Activated naive CD4-positive, alpha-beta T cell treated with anti-CD3 and anti-CD28 coated beads for 36 hours (primary cell): ENCODE measurements at regions of chr22 and their contacts with region 1.

Region 1: DNA sequence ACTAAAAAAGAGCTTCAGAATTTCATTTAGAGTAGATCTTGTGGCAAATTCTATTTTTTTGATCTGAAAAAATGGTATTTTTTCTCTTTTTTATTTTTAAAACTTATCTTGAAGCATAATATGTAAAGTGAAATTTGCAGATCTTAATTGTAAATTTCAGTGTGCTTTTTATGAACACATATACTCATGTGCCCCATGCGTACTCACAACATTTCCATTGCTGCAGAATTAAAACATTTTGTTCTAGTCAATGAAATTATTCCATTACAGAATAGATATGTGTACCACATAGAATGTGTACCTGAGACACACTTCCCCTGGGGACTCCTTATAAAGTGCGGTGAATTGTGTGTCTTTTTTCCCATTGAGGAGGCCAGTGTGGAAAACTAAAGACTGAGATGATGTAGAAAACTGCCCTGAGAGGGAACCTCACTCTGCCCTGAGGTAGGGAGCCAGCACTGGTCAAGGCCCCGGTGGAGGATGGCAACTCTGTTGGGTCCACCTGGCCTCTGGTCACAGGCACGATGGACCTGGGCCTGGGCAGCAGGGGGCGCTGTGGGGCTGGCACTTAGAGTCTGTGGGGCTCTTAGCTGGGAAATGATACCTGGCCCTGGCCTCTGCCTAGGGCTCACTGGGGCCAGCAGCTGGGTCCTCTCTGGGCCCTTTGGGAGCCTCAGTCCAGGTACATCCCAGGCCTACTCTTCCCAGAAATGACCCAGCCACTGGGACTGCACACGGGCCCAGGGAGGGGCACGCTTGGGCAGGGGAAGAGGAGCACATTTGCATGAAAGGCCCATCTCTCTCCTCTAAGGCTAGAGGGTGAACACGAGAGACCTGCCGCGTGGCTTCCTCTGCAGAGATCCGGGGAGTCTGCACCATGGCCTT is 77.9 kb upstream of the TOP3B start:
- DNase-seq: peak; percentile 82
- H3K4me3 Mint-ChIP-seq: no peak overlapping the region
- H3K27ac Mint-ChIP-seq: no peak overlapping the region
- H3K4me1 Mint-ChIP-seq: no peaks in the 10 kb centered on the region
- H3K27me3 Mint-ChIP-seq: peaks cover 21% of the 10 kb centered on the region

Region 2: DNA sequence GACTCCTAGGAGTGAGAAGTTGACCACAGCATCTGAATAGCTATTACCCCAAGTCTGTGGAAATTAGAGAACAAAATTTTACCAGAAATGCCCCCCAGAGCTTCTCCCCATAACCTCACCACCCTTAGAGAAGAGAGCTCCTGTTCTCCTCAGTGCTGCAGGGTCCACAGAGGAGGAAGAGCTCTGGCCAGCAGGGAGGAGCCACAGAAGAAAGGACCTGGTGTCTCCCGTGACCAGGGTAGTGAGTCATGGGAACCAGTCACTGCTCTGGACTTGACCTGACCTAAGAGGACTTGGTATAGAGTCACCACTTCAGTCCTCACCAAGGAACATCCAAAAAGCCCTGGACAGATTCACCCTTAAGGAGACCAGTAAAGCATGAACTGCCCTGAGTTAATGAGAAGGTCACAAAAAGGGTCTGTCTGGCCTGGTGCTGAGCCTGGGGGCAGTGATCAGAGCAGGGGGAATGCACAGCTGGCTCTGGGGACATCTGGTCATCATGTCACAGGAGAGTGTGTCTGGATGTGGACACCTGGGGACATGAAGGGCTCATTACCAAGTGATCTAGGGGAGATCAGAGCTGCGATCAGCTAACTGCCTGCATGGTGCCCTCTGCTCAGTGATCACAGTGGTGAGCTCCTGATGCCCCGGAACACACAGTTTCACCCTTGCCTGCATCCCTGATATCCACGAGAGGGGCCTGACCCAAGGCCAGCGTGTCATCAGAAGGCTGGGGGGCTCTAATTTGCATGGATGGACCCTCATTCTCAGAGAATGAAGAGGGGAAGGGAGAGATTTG is 25.5 kb after region 1 on chr22:
- CTCF ChIA-PET with region 1: no interaction called
- intact Hi-C with region 1: no loop called
- DNase-seq: no peak
- H3K4me3 Mint-ChIP-seq: no peak overlapping the region
- H3K27ac Mint-ChIP-seq: no peak overlapping the region
- H3K4me1 Mint-ChIP-seq: no peaks in the 10 kb centered on the region
- H3K27me3 Mint-ChIP-seq: peaks cover 16% of the 10 kb centered on the region

Region 3: DNA sequence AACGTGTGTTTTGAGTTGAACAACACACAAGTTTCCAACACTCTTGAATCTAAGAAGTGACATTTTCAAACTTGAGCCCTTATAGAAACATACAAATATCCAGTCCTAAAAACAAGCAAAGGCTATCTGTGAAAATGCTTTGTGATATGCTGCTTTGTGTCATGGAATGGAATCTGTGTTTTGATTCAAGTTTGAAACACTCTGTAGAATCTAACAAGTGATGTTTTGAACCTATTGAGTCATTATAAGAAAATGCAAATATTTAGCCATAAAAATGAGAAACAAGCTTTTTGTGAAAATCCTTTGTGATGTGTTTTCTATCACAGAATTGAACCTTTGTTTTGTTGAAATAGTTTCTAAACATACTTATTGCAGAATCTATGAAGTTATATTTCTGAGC is 78.5 kb after region 1 on chr22:
- CTCF ChIA-PET with region 1: interaction called, 10 read pairs
- intact Hi-C with region 1: no loop called
- DNase-seq: no peak
- H3K4me3 Mint-ChIP-seq: no peak overlapping the region
- H3K27ac Mint-ChIP-seq: no peak overlapping the region
- H3K4me1 Mint-ChIP-seq: no peaks in the 10 kb centered on the region
- H3K27me3 Mint-ChIP-seq: peaks cover 20% of the 10 kb centered on the region